Thyroid gland (tissue), 4 donors: ENCODE measurements at regions of chr15 and their contacts with region 1.

Region 1: DNA sequence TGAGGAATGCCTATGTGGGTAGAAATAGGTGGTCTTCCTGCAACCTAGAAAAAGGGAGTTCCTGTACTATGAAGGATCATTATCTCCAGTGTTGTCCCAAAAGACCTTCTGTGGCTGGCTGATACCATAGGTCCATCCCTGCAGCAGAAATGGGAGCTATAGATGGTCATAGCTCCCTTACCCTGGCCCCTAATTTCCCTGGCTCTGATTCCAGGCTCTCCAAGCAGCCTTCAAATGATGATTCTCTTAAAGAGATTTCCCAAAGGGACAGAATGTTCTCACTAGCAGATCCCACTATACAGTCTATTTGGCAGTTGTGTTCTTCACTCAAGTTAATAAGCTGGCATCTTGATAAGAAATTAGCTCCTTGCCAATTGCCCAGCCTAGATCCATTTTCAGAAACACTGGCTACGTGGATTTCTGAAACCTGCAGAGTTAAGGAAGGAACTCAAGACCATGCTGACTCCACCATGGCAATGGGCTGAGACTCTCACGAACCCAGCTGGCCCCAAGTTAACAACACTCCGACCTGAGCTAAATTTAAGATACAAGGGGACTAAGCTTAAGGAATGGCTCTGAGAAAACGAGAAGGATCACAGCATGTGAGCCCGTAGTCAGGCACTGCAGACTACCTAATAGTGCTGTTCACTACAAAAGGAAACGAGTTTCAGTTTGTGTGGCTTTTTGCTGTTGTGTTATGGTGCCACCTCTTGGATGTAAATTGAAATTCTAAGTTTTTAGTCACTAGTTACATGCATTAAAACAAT is 11.4 kb downstream of the C15orf40 start:
- DNase-seq: peak; percentile 19 to 33
- H3K4me3 ChIP-seq: no peak overlapping the region
- H3K27ac ChIP-seq: peak overlapping the region in 1 of 3 donors; percentile 73
- H3K4me1 ChIP-seq: peaks cover 5 to 7% of the 10 kb centered on the region in 2 donors
- H3K27me3 ChIP-seq: no peaks in the 10 kb centered on the region
- CTCF ChIP-seq: peak in 5 of 6 experiments; percentile 27 to 86 (median 61)
- POLR2A ChIP-seq: no peak

Region 2: GRCh38 chr15:82540055-82540983 is 459.8 kb before region 1 on chr15 and contains the start of gene RPS17:
- intact Hi-C with region 1: loop called (anchors 10 kb)
- DNase-seq: peak; percentile 97 to 98
- H3K4me3 ChIP-seq: peak within 1 kb of the TSS; percentile 61 to 98 (median 90)
- H3K27ac ChIP-seq: peak within 1 kb of the TSS; percentile 77 to 94 (median 81)
- H3K4me1 ChIP-seq: peaks cover 10 to 18% of the 10 kb centered on the region in 2 donors
- H3K27me3 ChIP-seq: no peaks in the 10 kb centered on the region
- CTCF ChIP-seq: peak; percentile 88 to 100 (median 98)
- POLR2A ChIP-seq: peak; percentile 52 to 92
- total RNA-seq, gene RPS17: 1,180 to 3,226 (median 2,104) TPM

Region 3: GRCh38 chr15:82849556-82850512 is 150.3 kb before region 1 on chr15:
- intact Hi-C with region 1: loop called (anchors 5 kb)
- DNase-seq: peak; percentile 92 to 95
- H3K4me3 ChIP-seq: no peak overlapping the region
- H3K27ac ChIP-seq: peak overlapping the region; percentile 45 to 89 (median 82)
- H3K4me1 ChIP-seq: peaks cover 0 to 12% of the 10 kb centered on the region in 2 donors
- H3K27me3 ChIP-seq: no peaks in the 10 kb centered on the region
- CTCF ChIP-seq: peak; percentile 33 to 98 (median 84)
- POLR2A ChIP-seq: peak in 1 of 2 donors; percentile 27

Region 4: DNA sequence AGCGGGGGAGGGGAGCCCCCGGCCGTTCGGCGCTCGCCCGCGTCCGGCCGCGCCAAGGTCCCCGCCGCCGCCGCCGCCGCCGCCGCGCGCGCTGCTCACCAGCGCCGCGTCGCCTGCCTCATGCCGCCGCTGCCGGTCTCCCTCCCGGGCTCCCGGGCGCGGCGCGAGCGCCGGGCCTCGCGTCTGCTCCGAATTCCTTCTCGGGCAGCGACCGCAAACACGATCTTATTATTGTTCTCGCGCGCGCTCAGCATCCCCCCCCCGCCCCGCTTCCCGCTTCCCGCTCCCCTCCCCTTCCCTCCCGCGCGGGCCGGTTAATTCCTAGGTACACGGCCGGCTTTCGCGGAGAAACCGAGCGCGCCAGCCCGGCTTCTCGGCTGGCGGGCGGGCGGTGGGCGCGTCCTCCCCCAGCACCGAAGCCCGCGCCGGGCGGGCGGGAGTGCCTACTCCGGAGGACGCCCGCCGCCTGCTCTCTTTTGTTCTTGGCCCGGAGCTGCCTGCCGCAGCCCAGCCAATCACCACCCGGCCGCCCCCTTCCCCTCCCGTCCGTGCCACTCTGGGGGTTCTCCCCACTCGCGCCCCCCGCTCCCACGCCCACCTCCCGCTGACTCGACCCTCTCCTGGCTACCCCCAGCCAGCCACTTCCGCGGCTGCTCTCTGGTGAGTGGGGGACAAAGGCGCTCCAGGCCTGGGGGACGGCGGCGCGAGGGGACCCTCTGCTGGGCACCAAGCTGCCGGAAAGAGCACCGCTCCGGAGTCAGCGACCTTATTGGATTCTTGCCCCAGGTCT is 207.7 kb after region 1 on chr15 and contains the start of gene HDGFL3:
- intact Hi-C with region 1: loop called (anchors 10 kb)
- DNase-seq: peak; percentile 68 to 69
- H3K4me3 ChIP-seq: peak within 1 kb of the TSS; percentile 48 to 99 (median 96)
- H3K27ac ChIP-seq: peak within 1 kb of the TSS; percentile 90 to 96 (median 91)
- H3K4me1 ChIP-seq: peaks cover 12 to 26% of the 10 kb centered on the region in 2 donors
- H3K27me3 ChIP-seq: no peaks in the 10 kb centered on the region
- CTCF ChIP-seq: peak in 2 of 6 experiments; percentile 35 to 37
- POLR2A ChIP-seq: no peak
- total RNA-seq, gene HDGFL3: 26.8 to 53.2 (median 41.5) TPM